ENCODE measurements at regions of chr11 and their contacts with region 1.

Region 1: DNA sequence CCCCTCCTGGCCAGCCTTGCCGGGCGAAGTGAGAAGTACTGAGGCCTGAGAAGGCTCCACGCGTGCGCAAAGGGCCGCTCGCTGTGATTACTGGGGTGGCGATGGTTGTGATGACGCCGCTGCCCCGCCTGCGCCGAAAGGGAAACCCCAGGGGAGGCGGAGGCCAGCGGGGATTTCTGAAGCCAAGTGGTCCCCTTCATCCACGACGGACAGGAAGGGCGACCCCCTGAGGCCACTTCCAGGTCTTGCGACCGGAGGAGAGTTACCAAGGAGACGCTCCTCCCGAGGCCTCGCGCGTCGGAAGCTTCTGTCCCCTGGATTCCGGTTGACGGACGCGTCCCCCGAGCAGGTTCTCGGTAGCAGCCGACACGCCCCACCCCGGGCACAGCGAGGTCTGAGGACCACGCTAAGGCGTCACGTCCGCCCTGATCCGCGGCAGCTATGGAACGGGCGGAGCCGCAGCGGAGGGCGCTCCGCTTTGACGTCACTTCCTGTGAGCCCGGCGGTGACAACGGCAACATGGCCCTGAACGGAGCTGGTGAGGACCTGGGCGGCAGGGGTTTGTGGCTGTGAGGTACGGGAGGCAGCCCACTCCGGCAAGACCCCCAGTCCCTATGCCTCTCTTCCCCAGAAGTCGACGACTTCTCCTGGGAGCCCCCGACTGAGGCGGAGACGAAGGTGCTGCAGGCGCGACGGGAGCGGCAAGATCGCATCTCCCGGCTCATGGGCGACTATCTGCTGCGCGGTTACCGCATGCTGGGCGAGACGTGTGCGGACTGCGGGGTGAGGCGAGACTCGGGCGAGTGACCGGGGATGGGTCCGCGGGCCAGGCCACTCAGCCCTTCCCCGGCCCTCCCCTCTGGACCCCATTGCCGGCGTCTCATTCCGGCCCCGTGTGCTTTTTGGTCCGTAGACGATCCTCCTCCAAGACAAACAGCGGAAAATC is at the start of gene ZNRD2:
- DNase-seq: peak; percentile 97
- ATAC-seq: peak; percentile 63 to 65
- H3K4me3 ChIP-seq: peak within 1 kb of the TSS; percentile 84 to 99 (median 95)
- H3K27ac ChIP-seq: peak within 1 kb of the TSS; percentile 100
- H3K4me1 ChIP-seq: peaks cover 49 to 61% of the 10 kb centered on the region in 2 donors
- H3K27me3 ChIP-seq: no peaks in the 10 kb centered on the region
- CTCF ChIP-seq: peak in 4 of 5 experiments; percentile 45 to 70 (median 58)
- POLR2A ChIP-seq: peak; percentile 88 to 95
- total RNA-seq, gene ZNRD2: 54.7 to 99.4 (median 75.3) TPM

Region 2: GRCh38 chr11:65471410-65471762 is 98.9 kb before region 1 on chr11:
- in situ Hi-C with region 1: no loop called
- intact Hi-C with region 1: loop called (anchors 5 kb)
- DNase-seq: peak; percentile 83 to 97
- ATAC-seq: peak; percentile 55 to 58
- H3K4me3 ChIP-seq: peak overlapping the region; percentile 23 to 49 (median 40)
- H3K27ac ChIP-seq: peak overlapping the region; percentile 97 to 100 (median 98)
- H3K4me1 ChIP-seq: peaks cover 52% of the 10 kb centered on the region in 2 donors
- H3K27me3 ChIP-seq: no peaks in the 10 kb centered on the region
- CTCF ChIP-seq: peak; percentile 60 to 75 (median 72)
- POLR2A ChIP-seq: peak in 1 of 2 donors; percentile 29

Region 3: DNA sequence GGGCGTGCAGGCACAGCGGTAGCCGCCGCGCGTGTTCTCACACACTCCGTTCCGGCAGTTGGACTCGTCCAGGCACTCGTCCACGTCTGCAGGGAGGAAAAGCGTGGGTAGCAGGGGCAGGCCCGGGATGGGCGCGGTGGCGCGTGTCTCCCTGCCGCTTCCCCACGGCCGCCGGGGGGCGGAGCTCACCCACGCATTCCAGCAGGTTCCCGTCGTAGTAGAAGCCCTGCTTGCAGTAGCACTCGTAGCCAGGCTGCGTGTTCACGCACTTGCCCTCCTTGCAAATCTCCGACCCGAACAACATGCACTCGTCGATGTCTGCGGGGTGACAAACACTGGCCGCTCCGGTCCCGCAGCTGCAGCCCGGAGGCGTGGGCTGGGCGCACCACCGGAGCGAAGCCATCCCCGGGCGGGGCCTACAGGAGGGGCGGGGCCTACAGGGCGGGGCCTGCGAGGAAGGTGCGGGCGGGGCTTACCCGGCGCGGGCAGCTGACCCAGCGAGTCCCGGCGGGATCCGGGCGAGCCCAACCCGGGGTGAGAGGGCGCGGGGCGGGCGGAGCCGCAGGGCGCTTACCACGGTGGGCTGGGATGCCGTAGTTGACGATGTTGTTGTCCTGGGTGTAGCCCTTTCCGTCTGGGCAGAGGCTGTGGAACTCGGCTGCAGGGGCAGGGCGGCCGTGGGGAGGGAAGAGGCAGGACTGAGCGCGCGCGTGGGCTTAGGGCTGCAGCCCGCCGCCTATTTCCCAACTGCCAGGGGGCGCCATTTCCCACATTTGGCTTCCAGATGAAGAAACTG is 29.8 kb before region 1 on chr11:
- in situ Hi-C with region 1: no loop called
- intact Hi-C with region 1: loop called (anchors 1 kb)
- DNase-seq: peak; percentile 75 to 90
- ATAC-seq: peak; percentile 88
- H3K4me3 ChIP-seq: peak overlapping the region; percentile 60 to 76 (median 64)
- H3K27ac ChIP-seq: peak overlapping the region; percentile 86 to 92 (median 90)
- H3K4me1 ChIP-seq: peaks cover 7 to 16% of the 10 kb centered on the region in 2 donors
- H3K27me3 ChIP-seq: no peaks in the 10 kb centered on the region
- CTCF ChIP-seq: peak; percentile 82 to 96 (median 92)
- POLR2A ChIP-seq: peak; percentile 52 to 67

Region 4: GRCh38 chr11:65558002-65558931 is 12.0 kb before region 1 on chr11 and contains the start of gene LTBP3:
- in situ Hi-C with region 1: no loop called
- intact Hi-C with region 1: loop called (anchors 1 kb)
- DNase-seq: peak; percentile 67 to 86
- ATAC-seq: peak; percentile 67 to 73
- H3K4me3 ChIP-seq: peak within 1 kb of the TSS; percentile 55 to 70 (median 63)
- H3K27ac ChIP-seq: peak within 1 kb of the TSS; percentile 95 to 99 (median 97)
- H3K4me1 ChIP-seq: peaks cover 61 to 62% of the 10 kb centered on the region in 2 donors
- H3K27me3 ChIP-seq: no peaks in the 10 kb centered on the region
- CTCF ChIP-seq: peak in 3 of 5 experiments; percentile 18 to 27 (median 24)
- POLR2A ChIP-seq: peak; percentile 52 to 54
- total RNA-seq, gene LTBP3: 18.5 to 56.6 (median 35.6) TPM

Region 5: GRCh38 chr11:65588199-65589054 is 18.2 kb after region 1 on chr11:
- in situ Hi-C with region 1: no loop called
- intact Hi-C with region 1: loop called (anchors 1 kb)
- DNase-seq: peak; percentile 80 to 92
- ATAC-seq: peak; percentile 69 to 80
- H3K4me3 ChIP-seq: peak overlapping the region in 3 of 4 donors; percentile 23 to 34 (median 26)
- H3K27ac ChIP-seq: peak overlapping the region; percentile 91 to 99 (median 98)
- H3K4me1 ChIP-seq: peaks cover 65 to 72% of the 10 kb centered on the region in 2 donors
- H3K27me3 ChIP-seq: no peaks in the 10 kb centered on the region
- CTCF ChIP-seq: peak; percentile 55 to 84 (median 70)
- POLR2A ChIP-seq: peak; percentile 18 to 29

Region 6: DNA sequence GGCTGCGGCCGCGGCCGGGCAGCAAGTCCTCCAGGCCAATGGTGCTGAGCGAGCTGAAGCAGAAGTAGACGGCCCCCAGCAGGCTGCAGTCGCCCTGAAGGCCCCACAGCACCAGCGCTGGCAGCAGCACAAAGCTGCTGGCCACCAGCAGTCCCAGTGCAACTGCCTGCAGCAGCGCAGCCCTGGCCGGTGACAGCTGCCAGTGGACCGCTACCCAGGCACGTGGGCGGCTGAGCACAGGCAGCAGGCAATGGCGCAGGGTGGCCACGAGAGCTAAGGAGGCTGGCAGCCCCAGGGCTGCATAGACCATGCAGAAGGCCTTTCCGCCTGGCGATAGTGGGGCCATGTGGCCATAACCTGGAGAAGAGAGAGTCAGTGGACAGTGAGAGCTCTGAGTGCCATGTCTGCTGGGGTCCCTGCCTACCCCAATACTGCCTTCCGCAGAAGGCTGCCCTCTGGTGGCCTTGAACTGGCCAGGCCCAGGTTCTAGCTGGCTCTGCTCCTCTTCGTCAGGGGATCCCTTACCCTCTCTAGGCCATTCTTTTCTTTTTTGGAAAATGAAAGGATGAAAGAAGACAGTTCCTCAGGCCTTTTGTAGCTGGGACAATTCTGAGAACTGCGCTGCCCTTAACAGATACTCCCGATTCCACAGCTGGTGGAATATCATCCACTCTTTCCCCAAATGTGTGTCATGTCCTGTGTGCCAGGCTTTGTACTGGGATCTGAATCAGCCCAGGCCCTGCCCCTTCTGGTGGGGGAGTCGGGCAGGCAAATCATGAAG is 23.5 kb after region 1 on chr11:
- in situ Hi-C with region 1: no loop called
- intact Hi-C with region 1: loop called (anchors 1 kb)
- DNase-seq: peak; percentile 53 to 84
- ATAC-seq: peak; percentile 69
- H3K4me3 ChIP-seq: no peak overlapping the region
- H3K27ac ChIP-seq: peak overlapping the region; percentile 91 to 99 (median 98)
- H3K4me1 ChIP-seq: peaks cover 38 to 53% of the 10 kb centered on the region in 2 donors
- H3K27me3 ChIP-seq: no peaks in the 10 kb centered on the region
- CTCF ChIP-seq: peak; percentile 85 to 93 (median 92)
- POLR2A ChIP-seq: peak in 1 of 2 donors; percentile 11

Region 7: DNA sequence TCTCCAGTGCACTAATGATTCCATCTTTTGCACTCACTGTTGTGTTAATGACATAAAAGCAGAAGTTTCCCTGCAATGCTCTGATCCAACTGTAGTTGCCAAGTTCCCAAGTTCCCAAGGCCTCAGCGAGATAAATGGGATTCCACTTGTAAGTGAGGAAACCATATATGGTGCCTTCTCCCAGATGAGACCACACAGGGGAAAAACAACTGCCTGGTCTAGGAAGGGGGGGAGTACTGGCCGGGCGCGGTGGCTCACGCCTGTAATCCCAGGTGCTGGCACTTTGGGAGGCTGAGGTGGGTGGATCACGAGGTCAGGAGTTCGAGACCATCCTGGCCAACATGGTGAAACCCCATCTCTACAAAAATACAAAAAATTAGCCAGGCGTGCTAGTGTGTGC is 115.7 kb after region 1 on chr11:
- in situ Hi-C with region 1: no loop called
- intact Hi-C with region 1: no loop called
- DNase-seq: no peak
- ATAC-seq: no peak
- H3K4me3 ChIP-seq: no peak overlapping the region
- H3K27ac ChIP-seq: no peak overlapping the region
- H3K4me1 ChIP-seq: no peaks in the 10 kb centered on the region
- H3K27me3 ChIP-seq: no peaks in the 10 kb centered on the region
- CTCF ChIP-seq: no peak
- POLR2A ChIP-seq: no peak